CD4-positive, alpha-beta memory T cell (primary cell): ENCODE measurements at regions of chr1 and their contacts with region 1.

Region 1: DNA sequence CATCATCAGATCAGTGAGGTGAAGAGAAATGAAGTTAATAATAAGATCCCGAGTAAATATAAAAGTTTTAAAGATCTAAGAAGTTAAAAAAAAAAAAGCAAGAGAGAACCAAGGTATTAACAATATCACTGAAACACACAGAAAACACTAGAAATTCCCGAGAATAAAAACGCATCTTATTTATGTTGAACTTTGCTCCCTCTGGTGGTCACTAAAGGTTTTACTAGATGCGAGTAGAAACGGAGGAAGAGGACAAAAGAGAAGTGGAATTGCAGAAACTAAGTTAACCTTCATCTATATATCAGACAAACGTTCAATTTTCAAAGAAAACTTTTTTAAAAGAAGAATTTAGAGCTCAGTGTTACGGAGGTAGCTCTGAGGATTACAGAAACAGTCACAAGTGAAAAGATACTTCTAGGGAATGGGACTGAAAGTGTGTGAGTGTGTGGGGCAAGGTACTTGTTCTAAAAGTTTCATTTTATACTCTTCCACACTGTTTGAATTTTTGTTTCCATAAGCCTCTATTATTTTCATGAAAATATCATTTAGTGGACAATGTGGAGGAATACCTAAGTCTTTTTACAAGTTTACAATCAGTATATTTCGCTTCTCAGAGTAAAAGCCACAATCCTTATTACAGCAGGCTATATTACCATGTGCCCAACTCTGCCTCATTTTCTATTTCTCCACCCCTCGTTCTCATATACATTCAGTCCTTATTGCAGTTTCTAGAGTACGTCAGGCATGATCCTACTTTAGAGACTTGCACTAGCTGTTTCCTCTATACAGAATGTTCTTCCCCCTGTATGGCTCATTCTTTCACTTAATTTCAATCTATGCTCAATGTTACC is 19.7 kb downstream of the ACBD6 start:
- DNase-seq: peak in 4 of 5 donors; percentile 26 to 42 (median 35)
- H3K4me3 ChIP-seq: no peak overlapping the region
- H3K4me3 Mint-ChIP-seq: peak overlapping the region in 6 of 8 donors; percentile 38 to 69 (median 48)
- H3K27ac ChIP-seq: no peak overlapping the region
- H3K27ac Mint-ChIP-seq: peak overlapping the region in 3 of 7 donors; percentile 14 to 75 (median 50)
- H3K4me1 ChIP-seq: peaks cover 9% of the 10 kb centered on the region
- H3K4me1 Mint-ChIP-seq: peaks cover 14 to 36% (median 16%) of the 10 kb centered on the region in 4 donors
- H3K27me3 ChIP-seq: no peaks in the 10 kb centered on the region
- H3K27me3 Mint-ChIP-seq: no peaks in the 10 kb centered on the region

Region 2: DNA sequence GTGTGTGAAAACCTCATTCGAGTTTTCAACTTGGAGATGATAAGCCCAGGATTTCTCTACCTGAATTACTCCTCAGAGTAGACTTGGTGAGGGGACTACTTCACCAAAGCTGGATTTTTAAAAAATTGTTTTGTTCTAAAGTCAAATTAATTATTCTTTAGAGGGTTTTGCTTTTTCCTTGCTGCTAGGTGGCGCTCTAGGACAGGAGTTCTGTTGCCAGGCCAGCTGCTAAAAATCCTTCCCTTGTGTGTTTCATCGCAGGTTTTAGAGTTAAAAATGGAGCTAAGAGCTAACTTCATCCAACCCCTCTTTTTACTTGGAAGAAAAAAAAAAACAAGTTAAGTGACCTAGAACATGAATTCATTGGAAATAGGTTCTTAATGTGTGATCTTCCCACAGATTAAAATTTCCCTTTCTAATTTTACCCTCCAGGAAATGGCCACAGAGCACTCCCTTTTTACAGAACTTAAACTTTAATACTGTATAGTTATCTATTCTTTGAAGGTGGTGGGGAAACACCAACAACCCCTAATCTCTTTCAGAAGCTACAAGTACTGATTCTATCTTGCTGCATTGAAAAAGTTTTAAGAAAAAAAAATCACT is 776.2 kb before region 1 on chr1:
- CTCF ChIA-PET with region 1: interaction called, 3 read pairs
- POLR2A ChIA-PET with region 1: no interaction called
- intact Hi-C with region 1: loop called (anchors 1 kb)
- DNase-seq: peak; percentile 56 to 66 (median 59)
- H3K4me3 ChIP-seq: no peak overlapping the region
- H3K4me3 Mint-ChIP-seq: no peak overlapping the region
- H3K27ac ChIP-seq: no peak overlapping the region
- H3K27ac Mint-ChIP-seq: peak overlapping the region; percentile 44 to 85 (median 76)
- H3K4me1 ChIP-seq: peaks cover 18% of the 10 kb centered on the region
- H3K4me1 Mint-ChIP-seq: peaks cover 5 to 22% (median 17%) of the 10 kb centered on the region in 4 donors
- H3K27me3 ChIP-seq: no peaks in the 10 kb centered on the region
- H3K27me3 Mint-ChIP-seq: peaks cover 0 to 5% of the 10 kb centered on the region in 2 donors

Region 3: DNA sequence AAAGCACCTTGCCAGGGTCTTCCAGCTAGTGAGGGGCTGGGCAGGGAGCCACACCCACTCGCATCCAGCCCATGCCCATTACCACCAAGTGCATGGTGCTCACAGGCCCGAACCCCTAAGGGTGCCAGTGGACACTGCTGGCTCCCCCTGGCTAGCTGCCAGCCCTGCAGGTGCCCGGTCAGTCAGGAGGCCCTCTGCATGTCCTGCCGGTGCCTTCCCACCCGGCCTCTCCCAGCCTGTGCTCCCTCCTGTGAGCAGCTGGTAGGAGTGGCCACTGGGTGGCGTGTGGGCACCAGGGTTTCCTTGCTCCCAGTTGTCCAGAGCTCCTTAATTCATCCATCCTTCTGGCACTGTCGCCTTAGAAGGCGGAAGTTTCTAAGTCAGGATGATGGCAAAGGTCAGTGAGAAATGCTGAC is 294.6 kb before region 1 on chr1:
- CTCF ChIA-PET with region 1: interaction called, 4 read pairs
- POLR2A ChIA-PET with region 1: no interaction called
- intact Hi-C with region 1: loop called (anchors 5 kb)
- DNase-seq: no peak
- H3K4me3 ChIP-seq: no peak overlapping the region
- H3K4me3 Mint-ChIP-seq: no peak overlapping the region
- H3K27ac ChIP-seq: no peak overlapping the region
- H3K27ac Mint-ChIP-seq: no peak overlapping the region
- H3K4me1 ChIP-seq: peaks cover 3% of the 10 kb centered on the region
- H3K4me1 Mint-ChIP-seq: peaks cover 0 to 15% (median 2%) of the 10 kb centered on the region in 4 donors
- H3K27me3 ChIP-seq: no peaks in the 10 kb centered on the region
- H3K27me3 Mint-ChIP-seq: no peaks in the 10 kb centered on the region

Region 4: DNA sequence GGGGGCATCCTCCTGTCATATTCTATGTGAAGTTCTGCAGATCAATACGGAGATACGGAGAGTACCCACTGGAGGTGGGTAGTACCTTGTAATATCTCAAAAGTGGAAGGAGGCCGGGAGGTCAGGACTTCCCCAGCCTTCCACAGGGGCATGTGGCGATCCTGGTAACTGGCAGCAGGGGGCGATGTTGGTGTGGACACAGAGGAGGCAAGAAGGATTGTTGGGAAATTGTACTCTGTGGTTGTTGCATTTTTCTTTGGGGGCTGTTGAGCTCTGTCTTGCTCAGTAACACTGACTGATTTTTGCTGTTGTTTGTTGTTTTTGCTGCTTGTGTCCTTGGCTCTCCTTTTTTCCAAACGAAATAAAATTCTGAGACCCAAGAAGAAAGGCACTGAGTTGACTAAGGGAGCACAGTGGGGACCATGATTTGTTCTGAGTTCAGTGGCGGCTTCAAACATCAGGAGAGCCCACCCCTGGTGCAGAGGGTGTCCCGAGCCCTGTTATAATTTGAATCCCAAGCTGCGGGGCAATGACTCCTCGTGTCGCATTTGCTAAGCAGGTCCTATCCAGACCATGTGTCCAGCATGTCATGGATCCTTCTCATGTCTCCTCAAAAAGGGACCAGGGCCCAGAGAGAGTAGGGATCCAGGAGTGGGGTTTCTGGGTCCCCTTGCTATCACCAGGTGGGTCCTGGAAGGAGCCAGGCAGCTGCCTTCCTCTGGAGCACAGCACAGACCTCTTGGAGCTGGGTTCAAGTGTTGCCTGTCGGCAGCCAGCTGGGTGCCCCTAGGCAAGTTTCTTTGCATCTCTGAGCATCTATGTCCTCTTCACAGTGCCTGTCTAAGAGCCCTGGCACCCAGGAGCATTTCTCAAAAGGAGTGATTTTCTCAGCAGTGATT is 229.8 kb before region 1 on chr1:
- CTCF ChIA-PET with region 1: interaction called, 36 read pairs
- POLR2A ChIA-PET with region 1: no interaction called
- intact Hi-C with region 1: loop called (anchors 1 kb)
- DNase-seq: peak; percentile 38 to 62 (median 56)
- H3K4me3 ChIP-seq: no peak overlapping the region
- H3K4me3 Mint-ChIP-seq: no peak overlapping the region
- H3K27ac ChIP-seq: no peak overlapping the region
- H3K27ac Mint-ChIP-seq: no peak overlapping the region
- H3K4me1 ChIP-seq: no peaks in the 10 kb centered on the region
- H3K4me1 Mint-ChIP-seq: peaks cover 0 to 4% (median 3%) of the 10 kb centered on the region in 4 donors
- H3K27me3 ChIP-seq: peaks cover 5% of the 10 kb centered on the region
- H3K27me3 Mint-ChIP-seq: peaks cover 37 to 48% of the 10 kb centered on the region in 2 donors

Region 5: GRCh38 chr1:180494370-180494769 is 11.7 kb after region 1 on chr1:
- CTCF ChIA-PET with region 1: interaction called, 11 read pairs
- POLR2A ChIA-PET with region 1: no interaction called
- intact Hi-C with region 1: no loop called
- DNase-seq: no peak
- H3K4me3 ChIP-seq: no peak overlapping the region
- H3K4me3 Mint-ChIP-seq: no peak overlapping the region
- H3K27ac ChIP-seq: no peak overlapping the region
- H3K27ac Mint-ChIP-seq: peak overlapping the region in 3 of 7 donors; percentile 29 to 70 (median 60)
- H3K4me1 ChIP-seq: peaks cover 10% of the 10 kb centered on the region
- H3K4me1 Mint-ChIP-seq: peaks cover 14 to 28% (median 24%) of the 10 kb centered on the region in 4 donors
- H3K27me3 ChIP-seq: no peaks in the 10 kb centered on the region
- H3K27me3 Mint-ChIP-seq: no peaks in the 10 kb centered on the region

Region 6: DNA sequence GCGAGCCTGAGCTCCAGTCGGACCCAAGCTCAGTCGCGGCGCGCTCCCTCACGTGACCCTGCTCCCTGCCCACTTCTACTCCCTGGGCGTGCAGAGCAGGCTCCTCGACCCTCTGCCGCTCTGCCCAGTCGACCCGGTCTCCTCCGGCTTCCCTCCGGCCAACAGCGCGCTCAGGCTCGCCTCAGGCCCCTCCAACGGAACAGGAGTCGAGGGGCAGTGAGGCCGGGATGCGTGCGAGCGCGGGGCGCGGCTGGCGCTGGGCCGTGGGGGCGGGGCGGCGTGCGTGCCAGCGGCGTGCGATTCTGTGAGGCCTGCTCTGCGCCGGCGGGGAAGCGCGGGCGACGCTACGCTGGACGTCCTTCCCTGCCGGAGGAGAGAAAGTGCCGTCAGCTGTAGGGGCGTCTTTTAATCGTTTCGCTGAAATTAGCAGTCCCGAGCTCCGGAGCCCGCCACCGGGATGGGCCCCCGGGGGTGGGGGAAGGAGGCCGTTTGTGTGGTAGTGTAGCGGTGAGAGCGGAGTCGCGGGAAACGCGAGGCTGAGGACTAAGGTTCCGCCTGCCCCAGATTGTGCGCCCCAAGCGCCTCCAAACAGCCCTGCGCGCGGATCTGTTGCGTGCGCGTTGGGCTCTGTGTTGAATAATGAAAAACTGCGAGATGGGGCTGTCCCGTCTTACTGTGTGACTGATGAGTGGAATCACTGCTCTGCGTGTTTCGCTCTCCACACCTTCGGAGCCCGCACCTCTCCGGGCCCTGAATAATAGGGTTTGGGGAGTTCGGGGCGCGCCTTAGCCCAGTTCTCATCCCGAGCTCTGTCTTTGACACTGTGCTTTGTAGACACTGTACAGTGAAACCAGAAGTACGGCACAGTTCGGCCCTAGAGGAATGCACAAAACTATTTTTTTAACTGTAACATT is 20.0 kb after region 1 on chr1 and contains the start of gene ACBD6:
- CTCF ChIA-PET with region 1: interaction called, 20 read pairs
- POLR2A ChIA-PET with region 1: interaction called, 4 read pairs
- intact Hi-C with region 1: no loop called
- DNase-seq: peak; percentile 86 to 91 (median 88)
- H3K4me3 ChIP-seq: peak within 1 kb of the TSS; percentile 89 to 95
- H3K4me3 Mint-ChIP-seq: peak within 1 kb of the TSS; percentile 96 to 99 (median 98)
- H3K27ac ChIP-seq: peak within 1 kb of the TSS; percentile 71
- H3K27ac Mint-ChIP-seq: peak within 1 kb of the TSS; percentile 92 to 99 (median 97)
- H3K4me1 ChIP-seq: peaks cover 42% of the 10 kb centered on the region
- H3K4me1 Mint-ChIP-seq: peaks cover 23 to 42% (median 31%) of the 10 kb centered on the region in 4 donors
- H3K27me3 ChIP-seq: no peaks in the 10 kb centered on the region
- H3K27me3 Mint-ChIP-seq: no peaks in the 10 kb centered on the region
- total RNA-seq, gene ACBD6: 55.1 to 64.2 TPM